ENCODE measurements at regions of chr14 and their contacts with region 1.

Region 1: GRCh38 chr14:102516531-102517415 is 7.2 kb upstream of the ANKRD9 start:
- DNase-seq: peak; percentile 56
- ATAC-seq: peak; percentile 85
- H3K4me3 Mint-ChIP-seq: peak overlapping the region; percentile 70
- H3K27ac Mint-ChIP-seq: no peak overlapping the region
- H3K4me1 Mint-ChIP-seq: peaks cover 3% of the 10 kb centered on the region
- H3K27me3 Mint-ChIP-seq: no peaks in the 10 kb centered on the region
- CTCF ChIP-seq: peak; percentile 99

Region 2: GRCh38 chr14:102500158-102500662 is 16.6 kb before region 1 on chr14:
- CTCF ChIA-PET with region 1: interaction called, 11 read pairs
- POLR2A ChIA-PET with region 1: interaction called, 4 read pairs
- intact Hi-C with region 1: no loop called
- DNase-seq: peak; percentile 33
- ATAC-seq: no peak
- H3K4me3 Mint-ChIP-seq: no peak overlapping the region
- H3K27ac Mint-ChIP-seq: peak overlapping the region; percentile 59
- H3K4me1 Mint-ChIP-seq: peaks cover 9% of the 10 kb centered on the region
- H3K27me3 Mint-ChIP-seq: no peaks in the 10 kb centered on the region
- CTCF ChIP-seq: no peak